Activated B cell treated with CpG ODN at 0.5 μM for 24 hours (primary cell): ENCODE measurements at regions of chr10 and their contacts with region 1.

Region 1: DNA sequence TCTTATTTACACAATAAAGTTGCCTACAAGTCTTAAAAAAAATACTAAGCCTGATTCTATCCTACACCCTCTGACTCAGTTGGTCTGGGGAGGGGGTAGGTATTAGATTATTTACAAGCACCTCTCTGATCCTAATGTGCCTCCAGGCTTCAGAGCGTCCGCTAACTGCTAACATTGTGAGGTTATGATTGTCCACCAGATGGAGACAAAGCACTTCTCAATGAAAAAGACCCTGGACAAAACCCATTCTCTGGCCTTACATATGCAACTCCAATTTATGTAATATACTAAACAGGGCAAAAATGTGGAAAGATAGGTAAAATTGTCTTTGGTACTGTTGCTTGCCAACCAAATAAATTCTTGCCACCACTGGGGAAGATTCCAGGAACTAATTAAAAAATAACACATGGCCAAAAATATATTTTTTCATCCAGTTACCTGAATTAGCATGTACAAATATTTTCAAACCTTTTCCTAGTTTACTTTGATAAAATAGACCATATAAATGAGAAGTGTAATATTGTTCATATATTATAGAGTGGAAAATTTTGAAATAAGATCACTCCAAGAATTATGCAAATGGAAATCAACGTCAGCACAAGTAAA is 92.4 kb downstream of the KIF20B start:
- DNase-seq: no peak
- ATAC-seq: peak; percentile 57
- H3K4me3 Mint-ChIP-seq: no peak overlapping the region
- H3K27ac Mint-ChIP-seq: no peak overlapping the region
- H3K4me1 Mint-ChIP-seq: peaks cover 4% of the 10 kb centered on the region
- H3K27me3 Mint-ChIP-seq: no peaks in the 10 kb centered on the region
- CTCF ChIP-seq: peak; percentile 80

Region 2: DNA sequence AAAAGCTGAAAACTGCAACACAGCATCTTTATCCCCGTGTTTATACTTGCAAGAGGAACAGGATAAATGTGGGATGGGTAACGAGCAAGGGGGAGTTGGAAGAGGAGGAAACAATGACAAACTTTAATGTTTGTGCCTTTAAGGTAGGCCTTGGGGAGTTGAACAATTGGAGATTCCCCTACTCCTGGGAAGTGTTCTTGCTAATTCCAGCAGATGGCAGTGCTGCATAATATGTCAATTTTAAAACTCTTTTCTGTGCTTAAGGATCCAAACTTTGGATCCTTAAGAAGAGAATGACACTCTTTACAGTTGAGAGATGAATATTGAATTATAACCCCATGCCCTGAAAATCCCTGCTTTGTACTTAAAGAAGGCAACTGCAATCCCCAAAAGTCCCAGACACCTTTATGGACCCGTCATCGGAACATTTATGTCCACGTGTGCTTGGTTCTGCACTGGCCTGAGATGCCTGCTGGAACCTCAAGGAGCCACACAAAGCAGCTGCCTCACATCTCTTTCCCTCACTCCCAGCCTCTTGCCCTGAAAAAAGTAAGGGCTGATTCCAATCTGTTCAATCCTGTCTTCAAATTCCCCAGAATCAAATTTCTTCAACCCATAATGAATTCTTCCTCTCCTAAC is 367.4 kb before region 1 on chr10:
- CTCF ChIA-PET with region 1: no interaction called
- POLR2A ChIA-PET with region 1: no interaction called
- intact Hi-C with region 1: loop called (anchors 1 kb)
- DNase-seq: no peak
- ATAC-seq: peak; percentile 57
- H3K4me3 Mint-ChIP-seq: no peak overlapping the region
- H3K27ac Mint-ChIP-seq: no peak overlapping the region
- H3K4me1 Mint-ChIP-seq: peaks cover 11% of the 10 kb centered on the region
- H3K27me3 Mint-ChIP-seq: no peaks in the 10 kb centered on the region
- CTCF ChIP-seq: no peak

Region 3: DNA sequence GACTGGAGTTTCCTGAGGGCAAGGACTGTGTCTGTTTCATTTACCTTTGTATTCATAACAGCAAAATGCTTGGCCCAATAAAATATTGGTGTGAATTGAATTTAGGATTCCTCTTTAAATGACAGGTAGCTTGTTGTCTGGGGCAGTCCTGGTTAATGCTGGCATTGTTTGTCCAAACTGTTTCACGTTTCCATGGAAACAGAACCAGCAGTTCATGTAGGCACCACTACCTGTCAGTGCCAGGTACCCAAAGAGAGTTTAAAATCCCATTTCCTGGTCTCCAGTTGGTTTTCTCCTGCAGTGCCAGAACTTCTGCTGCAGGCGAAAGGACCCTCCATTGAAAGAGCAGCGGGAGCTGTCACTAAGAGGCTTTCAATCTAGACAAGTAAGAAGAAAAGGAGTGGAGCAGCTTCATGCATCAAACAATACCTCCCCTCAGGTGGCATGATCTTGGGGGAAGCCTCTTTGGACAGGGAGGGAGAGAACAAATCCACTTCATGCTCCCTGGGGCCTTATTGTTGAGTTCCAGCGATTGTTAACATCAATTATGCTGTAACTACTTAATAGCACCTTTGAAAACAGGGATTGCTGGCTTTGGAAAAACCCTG is 17.3 kb after region 1 on chr10:
- CTCF ChIA-PET with region 1: no interaction called
- POLR2A ChIA-PET with region 1: no interaction called
- intact Hi-C with region 1: no loop called
- DNase-seq: no peak
- ATAC-seq: no peak
- H3K4me3 Mint-ChIP-seq: no peak overlapping the region
- H3K27ac Mint-ChIP-seq: no peak overlapping the region
- H3K4me1 Mint-ChIP-seq: no peaks in the 10 kb centered on the region
- H3K27me3 Mint-ChIP-seq: peaks cover 3% of the 10 kb centered on the region
- CTCF ChIP-seq: no peak

Region 4: GRCh38 chr10:89954787-89955566 is 161.2 kb after region 1 on chr10:
- CTCF ChIA-PET with region 1: no interaction called
- POLR2A ChIA-PET with region 1: no interaction called
- intact Hi-C with region 1: loop called (anchors 1 kb)
- DNase-seq: no peak
- ATAC-seq: no peak
- H3K4me3 Mint-ChIP-seq: no peak overlapping the region
- H3K27ac Mint-ChIP-seq: no peak overlapping the region
- H3K4me1 Mint-ChIP-seq: peaks cover 10% of the 10 kb centered on the region
- H3K27me3 Mint-ChIP-seq: no peaks in the 10 kb centered on the region
- CTCF ChIP-seq: peak; percentile 35

Region 5: GRCh38 chr10:90138844-90139243 is 345.1 kb after region 1 on chr10:
- CTCF ChIA-PET with region 1: no interaction called
- POLR2A ChIA-PET with region 1: no interaction called
- intact Hi-C with region 1: loop called (anchors 1 kb)
- DNase-seq: no peak
- ATAC-seq: peak; percentile 42
- H3K4me3 Mint-ChIP-seq: no peak overlapping the region
- H3K27ac Mint-ChIP-seq: no peak overlapping the region
- H3K4me1 Mint-ChIP-seq: no peaks in the 10 kb centered on the region
- H3K27me3 Mint-ChIP-seq: peaks cover 2% of the 10 kb centered on the region
- CTCF ChIP-seq: no peak

Region 6: DNA sequence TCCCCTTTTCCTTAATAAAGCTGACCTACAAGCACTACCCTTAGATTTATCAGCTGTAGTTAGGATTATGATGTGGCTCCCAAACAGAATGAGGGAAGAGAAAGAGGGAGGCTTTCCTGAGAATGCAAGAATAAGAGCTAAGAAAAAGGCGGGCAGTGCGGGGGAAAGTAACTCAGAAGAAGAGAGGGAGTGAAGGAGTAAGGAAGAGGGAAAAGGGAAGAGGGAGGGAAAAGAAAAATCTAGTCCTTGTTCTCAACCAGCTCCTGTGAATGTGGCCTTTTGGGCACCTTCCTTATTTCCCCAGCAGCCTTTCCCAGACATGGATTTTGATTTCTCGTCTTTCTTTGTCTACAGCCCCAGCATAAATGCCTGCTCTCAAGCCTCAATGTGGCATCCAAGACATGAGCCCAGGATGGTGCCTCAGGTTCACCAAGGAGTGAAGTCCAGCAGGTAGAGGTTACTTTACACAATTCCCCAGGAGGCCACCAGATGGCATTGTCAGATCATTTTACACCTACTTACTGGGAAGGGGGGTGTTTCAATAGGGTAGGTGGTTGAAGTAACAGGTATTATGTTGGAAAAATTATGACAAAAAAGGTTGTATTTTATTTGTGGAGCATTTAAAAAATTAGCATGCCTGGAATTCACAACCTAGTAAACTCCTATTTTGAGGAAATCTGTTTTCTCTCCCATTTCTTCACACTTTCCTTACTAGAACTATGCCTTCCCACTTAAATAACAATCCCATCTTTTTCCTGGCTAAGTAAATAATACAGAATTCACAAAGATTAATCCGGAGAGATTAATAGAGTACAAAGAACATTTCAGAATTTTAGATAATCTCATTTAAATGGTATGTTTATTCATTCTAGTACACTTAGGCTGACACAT is 957.6 kb after region 1 on chr10:
- CTCF ChIA-PET with region 1: no interaction called
- POLR2A ChIA-PET with region 1: no interaction called
- intact Hi-C with region 1: loop called (anchors 1 kb)
- DNase-seq: no peak
- ATAC-seq: peak; percentile 54
- H3K4me3 Mint-ChIP-seq: no peak overlapping the region
- H3K27ac Mint-ChIP-seq: no peak overlapping the region
- H3K4me1 Mint-ChIP-seq: peaks cover 5% of the 10 kb centered on the region
- H3K27me3 Mint-ChIP-seq: peaks cover 13% of the 10 kb centered on the region
- CTCF ChIP-seq: no peak

Region 7: DNA sequence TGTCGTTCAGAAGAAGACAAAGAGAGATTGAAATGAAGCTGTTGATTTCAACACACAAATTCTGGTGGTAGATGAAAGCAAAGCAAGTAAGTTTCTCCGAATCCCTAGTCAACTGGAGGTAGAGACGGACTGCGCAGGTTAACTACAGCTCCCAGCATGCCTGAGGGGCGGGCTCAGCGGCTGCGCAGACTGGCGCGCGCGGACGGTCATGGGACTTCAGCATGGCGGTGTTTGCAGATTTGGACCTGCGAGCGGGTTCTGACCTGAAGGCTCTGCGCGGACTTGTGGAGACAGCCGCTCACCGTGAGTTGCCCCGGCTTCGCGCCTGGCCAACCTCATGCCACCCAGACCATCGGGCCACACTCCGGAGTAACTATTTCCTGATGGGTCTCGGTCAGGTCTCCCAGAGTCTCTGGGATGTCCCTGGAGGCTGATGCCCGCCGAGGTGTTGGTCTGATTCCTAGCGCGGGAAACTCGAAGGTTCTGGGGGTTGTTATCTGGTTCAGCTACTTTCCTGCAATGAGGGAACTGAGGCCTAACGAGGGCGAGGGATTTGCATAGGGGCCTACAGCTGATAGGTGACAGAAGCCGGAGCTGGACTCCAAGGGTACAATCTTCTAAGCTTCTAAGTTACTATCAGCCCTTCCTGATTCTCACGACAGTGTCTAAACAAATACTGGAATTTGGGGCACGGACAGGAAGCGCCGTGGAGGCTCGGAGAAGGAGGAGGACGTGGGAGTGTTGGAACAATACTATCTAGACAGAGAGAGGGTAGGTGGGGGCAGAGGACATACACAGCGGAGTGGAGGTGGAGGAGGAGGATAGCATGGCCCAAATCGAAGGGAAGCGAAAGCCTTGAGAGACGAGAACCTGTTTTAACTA is 1078.3 kb after region 1 on chr10 and contains the start of gene RPP30:
- CTCF ChIA-PET with region 1: no interaction called
- POLR2A ChIA-PET with region 1: no interaction called
- intact Hi-C with region 1: loop called (anchors 1 kb)
- DNase-seq: peak; percentile 77
- ATAC-seq: peak; percentile 97
- H3K4me3 Mint-ChIP-seq: peak within 1 kb of the TSS; percentile 96
- H3K27ac Mint-ChIP-seq: peak within 1 kb of the TSS; percentile 89
- H3K4me1 Mint-ChIP-seq: peaks cover 30% of the 10 kb centered on the region
- H3K27me3 Mint-ChIP-seq: peaks cover 14% of the 10 kb centered on the region
- CTCF ChIP-seq: no peak
- total RNA-seq, gene RPP30: 43.7 and 44.6 TPM in 2 replicates